K562 (cell line): ENCODE measurements at regions of chr10 and their contacts with region 1.

Region 1: GRCh38 chr10:92087750-92088395 is 164.3 kb downstream of the BTAF1 start:
- DNase-seq: peak; percentile 37 to 73 (median 52)
- ATAC-seq: peak; percentile 100
- H3K4me3 ChIP-seq: no peak overlapping the region
- H3K27ac ChIP-seq: no peak overlapping the region
- H3K4me1 ChIP-seq: no peaks in the 10 kb centered on the region; a peak in 1 of 5 replicates
- H3K27me3 ChIP-seq: no peaks in the 10 kb centered on the region
- CTCF ChIP-seq: peak; percentile 75 to 91 (median 87)
- EP300 ChIP-seq: no peak
- POLR2A ChIP-seq: no peak
- RAD21 ChIP-seq: peak; percentile 92 to 94

Region 2: GRCh38 chr10:92208736-92209327 is 121.0 kb after region 1 on chr10:
- CTCF ChIA-PET with region 1: interaction called, 3 read pairs
- POLR2A ChIA-PET with region 1: interaction called, 3 read pairs
- in situ Hi-C with region 1: no loop called
- intact Hi-C with region 1: loop called (anchors 10 kb)
- DNase-seq: no peak
- ATAC-seq: no peak
- H3K4me3 ChIP-seq: no peak overlapping the region
- H3K27ac ChIP-seq: no peak overlapping the region
- H3K4me1 ChIP-seq: no peaks in the 10 kb centered on the region; a peak in 1 of 5 replicates
- H3K27me3 ChIP-seq: no peaks in the 10 kb centered on the region
- CTCF ChIP-seq: no peak
- EP300 ChIP-seq: no peak
- POLR2A ChIP-seq: no peak
- RAD21 ChIP-seq: no peak

Region 3: GRCh38 chr10:92290837-92291615 is 203.2 kb after region 1 on chr10 and contains the starts of genes CPEB3 and MARCHF5:
- CTCF ChIA-PET with region 1: interaction called, 27 read pairs
- POLR2A ChIA-PET with region 1: interaction called, 4 read pairs
- in situ Hi-C with region 1: loop called (anchors 25 kb)
- intact Hi-C with region 1: loop called (anchors 1 kb)
- DNase-seq: peak; percentile 79 to 94 (median 85)
- ATAC-seq: peak; percentile 97
- H3K4me3 ChIP-seq: peak within 1 kb of the TSS; percentile 97
- H3K27ac ChIP-seq: peak within 1 kb of the TSS; percentile 89
- H3K4me1 ChIP-seq: peaks cover 5 to 9% of the 10 kb centered on the region in 2 experiments; a peak in 4 of 5 replicates
- H3K27me3 ChIP-seq: no peaks in the 10 kb centered on the region
- CTCF ChIP-seq: peak; percentile 53 to 76 (median 61); a peak in 5 of 6 replicates
- EP300 ChIP-seq: no peak
- POLR2A ChIP-seq: peak; percentile 72
- RAD21 ChIP-seq: peak; percentile 39 to 47; a peak in 3 of 4 replicates
- polyA plus RNA-seq, gene CPEB3: 0.15 to 0.17 TPM
- polyA plus RNA-seq, gene MARCHF5: 3.4 to 4.0 TPM

Region 4: DNA sequence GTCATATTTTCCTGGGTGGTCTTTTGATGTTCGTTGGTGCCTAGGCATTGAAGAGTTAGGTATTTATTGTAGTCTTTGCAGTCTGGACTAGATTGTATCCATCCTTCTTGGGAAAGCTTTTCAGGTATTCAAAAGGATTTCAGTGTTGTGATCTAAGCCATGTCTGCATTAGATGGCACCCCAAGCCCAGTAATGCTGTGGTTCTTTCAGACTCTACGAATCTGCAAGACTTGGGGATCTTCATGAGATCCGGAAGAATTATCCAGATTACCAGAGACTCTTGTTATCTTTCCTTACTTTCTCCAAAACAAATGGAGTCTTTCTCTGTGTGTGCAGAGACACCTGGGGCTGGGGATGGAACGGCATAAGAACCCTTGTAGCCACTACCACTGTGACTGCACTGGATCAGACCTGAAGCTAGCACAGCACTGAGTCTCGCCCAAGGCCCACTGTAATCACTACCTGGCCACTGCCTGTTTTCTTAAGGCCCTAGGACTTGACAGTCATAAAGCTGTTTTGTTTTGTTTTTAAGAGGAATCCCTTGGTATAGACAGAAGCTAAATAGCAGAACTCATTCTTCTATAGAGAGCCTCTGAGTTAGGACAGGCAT is 278.6 kb after region 1 on chr10:
- CTCF ChIA-PET with region 1: no interaction called
- POLR2A ChIA-PET with region 1: no interaction called
- in situ Hi-C with region 1: no loop called
- intact Hi-C with region 1: loop called (anchors 5 kb)
- DNase-seq: no peak
- ATAC-seq: peak; percentile 40; the same call in 2 of the 3 replicates
- H3K4me3 ChIP-seq: no peak overlapping the region
- H3K27ac ChIP-seq: no peak overlapping the region
- H3K4me1 ChIP-seq: no peaks in the 10 kb centered on the region
- H3K27me3 ChIP-seq: no peaks in the 10 kb centered on the region; a peak in 1 of 5 replicates
- CTCF ChIP-seq: peak in 1 of 3 experiments; percentile 46; a peak in 2 of 6 replicates
- EP300 ChIP-seq: no peak
- POLR2A ChIP-seq: no peak
- RAD21 ChIP-seq: peak; percentile 62 to 64